GM18951 (cell line): ENCODE measurements at regions of chr14 and their contacts with region 1.

Region 1: GRCh38 chr14:68795597-68796417 is 2.9 kb upstream of the ZFP36L1 start:
- POLR2A ChIP-seq: peak; percentile 71

Region 2: GRCh38 chr14:68278581-68279436 is 517.0 kb before region 1 on chr14:
- in situ Hi-C with region 1: loop called (anchors 10 kb)
- POLR2A ChIP-seq: peak; percentile 27